MCF 10A (cell line): ENCODE measurements at regions of chr12 and their contacts with region 1.

Region 1: DNA sequence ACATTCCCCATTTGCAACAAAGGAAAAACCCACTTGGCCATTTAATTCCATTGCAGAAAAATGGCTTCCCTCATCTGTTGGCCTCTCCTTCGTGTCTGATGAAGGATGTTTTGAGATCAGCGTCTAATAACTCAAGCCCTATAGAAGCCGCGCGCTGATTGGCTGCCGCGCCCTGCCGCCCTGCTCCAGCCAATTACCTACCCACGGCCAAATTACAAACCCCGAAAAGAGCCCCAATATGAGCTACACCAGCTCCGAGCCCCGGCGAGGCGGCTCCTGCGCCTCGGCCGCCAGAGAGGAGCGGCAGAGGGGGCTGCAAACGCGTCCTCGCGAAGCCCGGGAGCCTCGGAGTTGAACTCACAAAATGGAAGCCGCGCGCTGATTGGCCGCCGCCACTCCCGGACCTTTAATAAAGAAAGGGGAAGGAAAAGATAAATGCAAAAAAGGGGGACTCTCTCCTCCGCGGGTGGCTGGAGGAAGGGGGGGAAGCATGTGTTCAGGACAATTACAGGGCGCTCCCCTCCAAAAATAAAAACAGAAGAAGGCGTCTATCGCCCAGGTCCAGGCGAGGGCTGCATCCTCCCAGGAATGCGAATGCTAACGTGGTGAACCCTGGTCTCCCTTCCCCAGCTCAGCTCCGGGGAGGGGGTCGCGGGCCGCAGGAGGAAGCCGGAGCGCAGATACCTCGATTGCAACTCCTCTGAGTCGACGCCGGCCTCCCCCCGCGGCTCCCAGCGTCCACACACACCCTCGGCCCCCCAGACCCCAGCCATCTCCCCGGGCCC is 771 bp upstream of the SETD1B start:
- DNase-seq: peak; percentile 96
- H3K4me3 Mint-ChIP-seq: peak overlapping the region; percentile 87
- H3K27ac Mint-ChIP-seq: peak overlapping the region; percentile 99
- H3K4me1 Mint-ChIP-seq: peaks cover 13% of the 10 kb centered on the region
- H3K27me3 Mint-ChIP-seq: no peaks in the 10 kb centered on the region
- CTCF ChIP-seq: no peak

Region 2: GRCh38 chr12:121248622-121249021 is 554.4 kb before region 1 on chr12:
- CTCF ChIA-PET with region 1: no interaction called
- POLR2A ChIA-PET with region 1: no interaction called
- intact Hi-C with region 1: no loop called
- DNase-seq: no peak
- H3K4me3 Mint-ChIP-seq: no peak overlapping the region
- H3K27ac Mint-ChIP-seq: no peak overlapping the region
- H3K4me1 Mint-ChIP-seq: peaks cover 5% of the 10 kb centered on the region
- H3K27me3 Mint-ChIP-seq: no peaks in the 10 kb centered on the region
- CTCF ChIP-seq: no peak

Region 3: GRCh38 chr12:121668750-121669520 is 134.1 kb before region 1 on chr12:
- CTCF ChIA-PET with region 1: no interaction called
- POLR2A ChIA-PET with region 1: no interaction called
- intact Hi-C with region 1: no loop called
- DNase-seq: peak; percentile 36
- H3K4me3 Mint-ChIP-seq: no peak overlapping the region
- H3K27ac Mint-ChIP-seq: no peak overlapping the region
- H3K4me1 Mint-ChIP-seq: peaks cover 10% of the 10 kb centered on the region
- H3K27me3 Mint-ChIP-seq: no peaks in the 10 kb centered on the region
- CTCF ChIP-seq: peak; percentile 39

Region 4: DNA sequence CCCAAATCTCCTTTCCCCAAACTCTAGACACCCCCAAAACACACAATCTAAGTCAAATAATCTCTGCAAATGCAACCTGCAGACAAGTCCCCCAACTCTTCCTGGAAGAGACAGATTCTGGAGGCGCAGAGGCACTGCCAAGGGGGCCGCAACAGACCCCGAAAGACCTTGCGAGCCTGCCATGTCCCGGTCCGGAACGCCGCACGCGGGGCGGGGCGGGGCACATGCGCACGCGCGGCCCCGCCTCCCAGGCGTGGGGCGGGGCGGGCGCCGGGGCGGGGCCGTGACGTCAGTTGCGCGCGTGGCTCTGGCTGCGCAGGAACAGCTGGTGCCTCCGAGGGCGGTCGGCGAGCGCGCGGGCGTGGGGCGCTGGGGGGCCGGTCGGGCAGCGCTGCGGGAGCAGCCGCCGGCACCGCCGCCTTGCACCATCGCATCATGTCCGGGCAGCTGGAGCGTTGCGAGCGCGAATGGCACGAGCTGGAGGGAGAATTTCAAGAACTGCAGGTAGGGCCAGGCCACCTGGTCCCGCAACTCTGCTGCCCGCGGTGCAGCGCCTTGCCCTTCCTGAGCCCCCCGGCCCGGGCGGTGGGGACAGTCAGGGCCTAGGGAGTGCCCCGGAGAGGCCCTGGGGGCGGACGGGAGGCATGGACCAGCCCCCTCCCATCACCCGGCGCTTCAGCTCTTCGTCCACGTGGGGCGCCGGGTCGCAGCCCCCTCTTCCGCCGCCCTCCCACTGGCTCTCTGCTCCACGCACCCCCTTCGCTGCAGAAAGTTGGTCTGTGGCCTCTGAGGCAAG is 90.4 kb before region 1 on chr12 and contains the start of gene TMEM120B:
- CTCF ChIA-PET with region 1: no interaction called
- POLR2A ChIA-PET with region 1: interaction called, 26 read pairs
- intact Hi-C with region 1: no loop called
- DNase-seq: peak; percentile 70
- H3K4me3 Mint-ChIP-seq: peak within 1 kb of the TSS; percentile 95
- H3K27ac Mint-ChIP-seq: peak within 1 kb of the TSS; percentile 57
- H3K4me1 Mint-ChIP-seq: peaks cover 23% of the 10 kb centered on the region
- H3K27me3 Mint-ChIP-seq: no peaks in the 10 kb centered on the region
- CTCF ChIP-seq: no peak
- total RNA-seq, gene TMEM120B: 10.5 and 14.2 TPM in 2 replicates